ENCODE measurements at regions of chr6 and their contacts with region 1.

Region 1: DNA sequence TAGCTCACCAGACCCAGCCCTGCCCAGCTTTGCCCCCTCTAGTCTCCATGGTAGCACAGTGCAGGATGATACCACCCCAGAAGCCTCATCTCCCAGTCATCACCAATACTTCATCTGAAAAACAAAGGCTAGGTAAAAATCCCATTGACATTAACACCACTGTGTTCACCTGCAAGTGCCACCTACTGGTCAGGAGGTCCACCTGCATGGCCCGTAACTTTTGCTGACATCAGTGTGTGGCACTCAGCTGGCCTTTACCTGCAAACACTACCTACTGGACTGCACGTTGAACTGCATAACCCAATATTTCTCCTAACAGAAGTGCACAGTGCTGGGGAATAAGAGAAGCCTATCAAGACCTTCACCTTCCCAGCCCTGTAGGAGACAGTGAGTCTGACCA is 234.7 kb upstream of the ADGRB3 start:
- DNase-seq: peak; percentile 35
- ATAC-seq: peak; percentile 85
- H3K4me3 Mint-ChIP-seq: no peak overlapping the region
- H3K27ac Mint-ChIP-seq: no peak overlapping the region
- H3K4me1 Mint-ChIP-seq: 0 out of 2 replicates have a peak, but pooled peaks cover 3% of the 10 kb centered on the region
- H3K27me3 Mint-ChIP-seq: no peaks in the 10 kb centered on the region
- CTCF ChIP-seq: peak; percentile 43; the same call in 1 of the 2 replicates

Region 2: GRCh38 chr6:68343901-68344300 is 56.5 kb before region 1 on chr6:
- CTCF ChIA-PET with region 1: interaction called, 12 read pairs
- POLR2A ChIA-PET with region 1: no interaction called
- DNase-seq: peak; percentile 64
- ATAC-seq: peak; percentile 96
- H3K4me3 Mint-ChIP-seq: no peak overlapping the region
- H3K27ac Mint-ChIP-seq: no peak overlapping the region
- H3K4me1 Mint-ChIP-seq: no peaks in the 10 kb centered on the region
- H3K27me3 Mint-ChIP-seq: no peaks in the 10 kb centered on the region
- CTCF ChIP-seq: peak; percentile 45